CD8-positive, alpha-beta memory T cell (primary cell): ENCODE measurements at regions of chr2 and their contacts with region 1.

Region 1: DNA sequence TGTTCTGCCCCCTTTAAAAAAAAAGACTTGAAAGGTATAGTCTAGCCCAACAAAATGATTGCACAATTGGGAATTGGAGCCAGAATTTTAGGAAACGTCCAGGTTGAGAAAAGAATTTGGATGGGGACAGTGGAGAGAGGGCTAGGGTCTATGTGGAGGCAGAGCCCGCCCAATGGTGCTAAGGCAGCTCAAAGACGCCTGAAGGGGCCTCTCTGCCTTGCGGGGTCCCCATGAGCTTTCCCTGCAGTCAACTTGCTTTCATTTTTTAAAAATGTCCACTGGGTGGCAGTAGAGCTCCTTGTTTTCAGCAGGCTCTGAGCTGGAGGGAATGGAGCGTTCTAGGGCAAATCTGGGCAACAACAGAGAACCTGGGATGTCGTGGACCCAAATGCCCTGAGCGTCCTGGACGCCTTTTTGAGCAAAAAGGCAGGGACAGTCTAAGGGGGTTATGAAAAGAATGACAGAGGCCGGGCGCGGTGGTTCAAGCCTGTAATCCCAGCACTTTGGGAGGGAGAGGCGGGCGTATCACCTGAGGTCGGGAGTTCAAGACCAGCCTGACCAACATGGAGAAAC is 40.2 kb upstream of the ITM2C start:
- DNase-seq: peak in 4 of 5 donors; percentile 43 to 74 (median 68)
- H3K4me3 ChIP-seq: peak overlapping the region; percentile 35
- H3K4me3 Mint-ChIP-seq: peak overlapping the region in 6 of 7 donors; percentile 5 to 72 (median 46)
- H3K27ac ChIP-seq: no peak overlapping the region
- H3K27ac Mint-ChIP-seq: peak overlapping the region in 1 of 8 donors; percentile 45
- H3K4me1 ChIP-seq: no peaks in the 10 kb centered on the region
- H3K4me1 Mint-ChIP-seq: peaks cover 7 to 17% (median 8%) of the 10 kb centered on the region in 3 donors
- H3K27me3 ChIP-seq: peaks cover 17% of the 10 kb centered on the region
- H3K27me3 Mint-ChIP-seq: peaks cover 29 to 30% of the 10 kb centered on the region in 2 donors

Region 2: GRCh38 chr2:230661072-230661957 is 163.2 kb before region 1 on chr2:
- CTCF ChIA-PET with region 1: no interaction called
- POLR2A ChIA-PET with region 1: no interaction called
- DNase-seq: peak in 3 of 5 donors; percentile 31 to 72 (median 67)
- H3K4me3 ChIP-seq: peak overlapping the region; percentile 20
- H3K4me3 Mint-ChIP-seq: peak overlapping the region; percentile 52 to 83 (median 71)
- H3K27ac ChIP-seq: no peak overlapping the region
- H3K27ac Mint-ChIP-seq: peak overlapping the region; percentile 75 to 97 (median 94)
- H3K4me1 ChIP-seq: peaks cover 91% of the 10 kb centered on the region
- H3K4me1 Mint-ChIP-seq: peaks cover 85 to 93% (median 92%) of the 10 kb centered on the region in 3 donors
- H3K27me3 ChIP-seq: no peaks in the 10 kb centered on the region
- H3K27me3 Mint-ChIP-seq: no peaks in the 10 kb centered on the region

Region 3: DNA sequence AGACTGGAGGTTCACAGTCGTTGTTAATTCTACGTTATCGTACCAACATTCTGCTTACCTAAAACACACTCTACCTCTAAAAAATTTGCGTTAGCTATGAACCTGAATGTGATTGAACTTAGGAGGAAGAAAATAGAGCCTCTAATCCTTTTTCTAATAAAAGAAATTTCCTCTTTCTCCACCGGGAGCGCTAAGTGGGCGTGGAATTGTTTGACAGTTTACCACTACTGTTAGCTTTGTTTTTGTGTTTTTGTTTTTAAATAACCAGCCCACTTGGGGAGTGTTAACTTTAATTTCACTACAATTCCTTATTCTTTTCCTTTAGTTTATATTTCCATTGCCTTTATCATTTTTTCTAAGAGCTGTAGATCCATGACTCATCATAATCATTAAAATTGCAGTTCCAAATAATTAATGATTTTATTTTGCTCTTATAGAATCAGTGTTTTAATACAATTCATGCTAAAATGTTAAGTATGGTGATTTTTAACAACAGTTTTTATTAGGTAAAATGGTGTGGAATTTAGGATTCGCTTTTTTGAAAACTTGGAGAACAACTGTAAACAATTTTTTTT is 14.7 kb before region 1 on chr2:
- CTCF ChIA-PET with region 1: interaction called, 11 read pairs
- POLR2A ChIA-PET with region 1: no interaction called
- DNase-seq: no peak
- H3K4me3 ChIP-seq: no peak overlapping the region
- H3K4me3 Mint-ChIP-seq: no peak overlapping the region
- H3K27ac ChIP-seq: no peak overlapping the region
- H3K27ac Mint-ChIP-seq: peak overlapping the region in 1 of 8 donors; percentile 36
- H3K4me1 ChIP-seq: no peaks in the 10 kb centered on the region
- H3K4me1 Mint-ChIP-seq: peaks cover 4 to 11% (median 11%) of the 10 kb centered on the region in 3 donors
- H3K27me3 ChIP-seq: no peaks in the 10 kb centered on the region
- H3K27me3 Mint-ChIP-seq: no peaks in the 10 kb centered on the region

Region 4: GRCh38 chr2:230842473-230842872 is 18.0 kb after region 1 on chr2:
- CTCF ChIA-PET with region 1: interaction called, 23 read pairs
- POLR2A ChIA-PET with region 1: interaction called, 6 read pairs
- DNase-seq: no peak
- H3K4me3 ChIP-seq: no peak overlapping the region
- H3K4me3 Mint-ChIP-seq: no peak overlapping the region
- H3K27ac ChIP-seq: no peak overlapping the region
- H3K27ac Mint-ChIP-seq: peak overlapping the region in 1 of 8 donors; percentile 39
- H3K4me1 ChIP-seq: no peaks in the 10 kb centered on the region
- H3K4me1 Mint-ChIP-seq: no peaks in the 10 kb centered on the region
- H3K27me3 ChIP-seq: no peaks in the 10 kb centered on the region
- H3K27me3 Mint-ChIP-seq: peaks cover 12 to 22% of the 10 kb centered on the region in 2 donors

Region 5: GRCh38 chr2:230847883-230848388 is 23.4 kb after region 1 on chr2:
- CTCF ChIA-PET with region 1: interaction called, 23 read pairs
- POLR2A ChIA-PET with region 1: no interaction called
- DNase-seq: peak; percentile 70 to 89 (median 76)
- H3K4me3 ChIP-seq: no peak overlapping the region
- H3K4me3 Mint-ChIP-seq: peak overlapping the region in 1 of 7 donors; percentile 24
- H3K27ac ChIP-seq: no peak overlapping the region
- H3K27ac Mint-ChIP-seq: no peak overlapping the region
- H3K4me1 ChIP-seq: peaks cover 6% of the 10 kb centered on the region
- H3K4me1 Mint-ChIP-seq: peaks cover 5 to 9% (median 6%) of the 10 kb centered on the region in 3 donors
- H3K27me3 ChIP-seq: no peaks in the 10 kb centered on the region
- H3K27me3 Mint-ChIP-seq: peaks cover 24 to 40% of the 10 kb centered on the region in 2 donors

Region 6: GRCh38 chr2:231052494-231053451 is 228.3 kb after region 1 on chr2:
- CTCF ChIA-PET with region 1: interaction called, 16 read pairs
- POLR2A ChIA-PET with region 1: no interaction called
- DNase-seq: peak; percentile 71 to 84 (median 78)
- H3K4me3 ChIP-seq: peak overlapping the region; percentile 81
- H3K4me3 Mint-ChIP-seq: peak overlapping the region; percentile 90 to 97 (median 92)
- H3K27ac ChIP-seq: no peak overlapping the region
- H3K27ac Mint-ChIP-seq: peak overlapping the region in 6 of 8 donors; percentile 24 to 87 (median 62)
- H3K4me1 ChIP-seq: peaks cover 19% of the 10 kb centered on the region
- H3K4me1 Mint-ChIP-seq: peaks cover 24 to 34% (median 30%) of the 10 kb centered on the region in 3 donors
- H3K27me3 ChIP-seq: no peaks in the 10 kb centered on the region
- H3K27me3 Mint-ChIP-seq: peaks cover 13 to 29% of the 10 kb centered on the region in 2 donors